B cell (primary cell): ENCODE measurements at regions of chr3 and their contacts with region 1.

Region 1: GRCh38 chr3:114308830-114309229 is 15.0 kb downstream of the TIGIT start:
- DNase-seq: peak; percentile 69
- ATAC-seq: peak; percentile 84
- H3K4me3 ChIP-seq: no peak overlapping the region
- H3K4me3 Mint-ChIP-seq: peak overlapping the region; percentile 77
- H3K27ac ChIP-seq: peak overlapping the region; percentile 74 to 82
- H3K27ac Mint-ChIP-seq: peak overlapping the region; percentile 94
- H3K4me1 ChIP-seq: peaks cover 22 to 27% of the 10 kb centered on the region in 2 donors
- H3K4me1 Mint-ChIP-seq: peaks cover 34% of the 10 kb centered on the region
- H3K27me3 ChIP-seq: no peaks in the 10 kb centered on the region
- H3K27me3 Mint-ChIP-seq: no peaks in the 10 kb centered on the region
- CTCF ChIP-seq: no peak

Region 2: DNA sequence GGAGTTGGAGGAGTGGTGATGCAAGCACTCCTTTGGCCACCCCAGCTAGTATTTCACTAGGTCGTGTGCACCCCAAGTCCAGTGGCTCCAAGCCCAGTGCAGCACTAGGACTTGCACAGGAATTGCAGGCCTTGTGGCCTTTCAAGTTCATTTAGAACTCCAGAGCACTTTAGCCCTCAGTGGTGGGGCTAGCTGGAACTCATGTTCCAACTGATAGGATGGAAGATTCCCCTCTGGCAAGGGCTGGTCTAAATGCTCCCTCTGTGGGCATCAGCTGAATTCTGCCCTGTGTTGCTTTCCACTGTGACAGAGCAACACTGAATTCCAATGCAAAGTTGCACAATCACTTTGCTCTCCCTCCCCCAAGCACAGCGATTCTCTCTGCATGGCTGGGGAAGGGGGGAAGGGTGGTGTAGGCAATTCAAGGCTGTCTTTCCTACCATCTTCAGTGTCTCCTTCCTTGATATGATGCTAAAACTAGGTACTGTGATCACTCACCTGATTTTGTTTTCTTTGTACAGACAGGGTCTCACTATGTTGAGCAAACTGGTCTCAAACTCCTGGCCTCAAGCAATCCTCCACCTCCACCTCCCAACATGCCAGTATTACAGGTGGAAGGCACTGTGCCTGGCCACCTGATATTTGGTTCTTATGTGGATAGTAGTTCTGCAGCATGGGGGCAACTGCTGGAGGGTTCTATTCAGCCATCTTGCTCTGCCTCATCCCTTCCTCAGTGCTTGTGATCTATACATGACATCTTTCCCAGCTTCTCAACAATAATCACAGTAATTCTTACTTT is 622.7 kb before region 1 on chr3:
- CTCF ChIA-PET with region 1: no interaction called
- POLR2A ChIA-PET with region 1: no interaction called
- intact Hi-C with region 1: no loop called
- DNase-seq: no peak
- ATAC-seq: no peak
- H3K4me3 ChIP-seq: no peak overlapping the region
- H3K4me3 Mint-ChIP-seq: no peak overlapping the region
- H3K27ac ChIP-seq: no peak overlapping the region
- H3K27ac Mint-ChIP-seq: no peak overlapping the region
- H3K4me1 ChIP-seq: peaks cover 3 to 4% of the 10 kb centered on the region in 2 donors
- H3K4me1 Mint-ChIP-seq: peaks cover 33% of the 10 kb centered on the region
- H3K27me3 ChIP-seq: no peaks in the 10 kb centered on the region
- H3K27me3 Mint-ChIP-seq: no peaks in the 10 kb centered on the region
- CTCF ChIP-seq: no peak

Region 3: DNA sequence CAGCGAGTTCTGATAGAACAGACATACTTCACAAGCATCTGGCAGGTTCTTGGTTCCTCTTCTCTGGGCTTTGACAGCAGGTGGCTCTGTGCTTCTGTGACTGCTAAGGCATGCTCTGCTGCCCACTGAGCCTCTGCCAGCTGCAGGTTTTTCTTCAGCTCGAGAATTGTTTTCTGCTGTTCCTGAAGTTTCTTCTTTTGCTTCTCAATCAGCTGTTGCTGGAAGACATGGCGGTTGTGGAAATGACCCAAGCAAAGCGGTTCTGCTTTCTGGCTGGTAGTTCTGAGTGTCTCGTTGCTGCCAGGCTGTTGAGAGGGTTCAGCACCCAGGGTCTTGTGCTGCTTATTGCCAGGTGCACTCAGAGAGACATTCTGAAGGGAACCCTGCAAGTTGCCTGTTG is 303.3 kb before region 1 on chr3:
- CTCF ChIA-PET with region 1: no interaction called
- POLR2A ChIA-PET with region 1: no interaction called
- intact Hi-C with region 1: no loop called
- DNase-seq: peak; percentile 91
- ATAC-seq: peak; percentile 95
- H3K4me3 ChIP-seq: peak overlapping the region in 4 of 5 experiments; percentile 31 to 43 (median 38)
- H3K4me3 Mint-ChIP-seq: peak overlapping the region; percentile 80
- H3K27ac ChIP-seq: peak overlapping the region; percentile 93 to 94
- H3K27ac Mint-ChIP-seq: peak overlapping the region; percentile 98
- H3K4me1 ChIP-seq: peaks cover 34 to 45% of the 10 kb centered on the region in 2 donors
- H3K4me1 Mint-ChIP-seq: peaks cover 55% of the 10 kb centered on the region
- H3K27me3 ChIP-seq: no peaks in the 10 kb centered on the region
- H3K27me3 Mint-ChIP-seq: no peaks in the 10 kb centered on the region
- CTCF ChIP-seq: peak; percentile 38

Region 4: GRCh38 chr3:114194750-114195149 is 114.1 kb before region 1 on chr3:
- CTCF ChIA-PET with region 1: no interaction called
- POLR2A ChIA-PET with region 1: no interaction called
- intact Hi-C with region 1: no loop called
- DNase-seq: no peak
- ATAC-seq: no peak
- H3K4me3 ChIP-seq: no peak overlapping the region
- H3K4me3 Mint-ChIP-seq: no peak overlapping the region
- H3K27ac ChIP-seq: no peak overlapping the region
- H3K27ac Mint-ChIP-seq: no peak overlapping the region
- H3K4me1 ChIP-seq: no peaks in the 10 kb centered on the region
- H3K4me1 Mint-ChIP-seq: no peaks in the 10 kb centered on the region
- H3K27me3 ChIP-seq: no peaks in the 10 kb centered on the region
- H3K27me3 Mint-ChIP-seq: no peaks in the 10 kb centered on the region
- CTCF ChIP-seq: no peak

Region 5: DNA sequence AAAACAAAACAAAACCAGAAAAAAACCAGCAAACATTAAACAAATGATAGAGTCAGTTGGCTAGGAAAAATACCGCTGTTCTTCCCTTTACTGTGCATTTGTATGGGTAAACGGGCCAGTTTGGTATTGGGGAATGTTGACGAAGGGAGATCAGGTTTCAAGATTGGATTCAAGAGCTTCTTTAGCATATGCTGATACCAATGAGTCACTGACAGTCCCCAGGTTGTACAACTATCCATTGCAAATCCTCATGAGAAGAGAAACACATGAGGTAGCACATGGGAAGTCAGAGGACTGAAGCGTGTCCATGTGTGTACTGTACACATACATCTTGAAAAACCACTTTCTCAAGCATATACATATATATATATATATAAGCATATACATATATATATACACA is 10.6 kb after region 1 on chr3:
- CTCF ChIA-PET with region 1: no interaction called
- POLR2A ChIA-PET with region 1: no interaction called
- intact Hi-C with region 1: no loop called
- DNase-seq: no peak
- ATAC-seq: no peak
- H3K4me3 ChIP-seq: no peak overlapping the region
- H3K4me3 Mint-ChIP-seq: no peak overlapping the region
- H3K27ac ChIP-seq: no peak overlapping the region
- H3K27ac Mint-ChIP-seq: peak overlapping the region; percentile 17
- H3K4me1 ChIP-seq: no peaks in the 10 kb centered on the region
- H3K4me1 Mint-ChIP-seq: peaks cover 3% of the 10 kb centered on the region
- H3K27me3 ChIP-seq: no peaks in the 10 kb centered on the region
- H3K27me3 Mint-ChIP-seq: no peaks in the 10 kb centered on the region
- CTCF ChIP-seq: no peak

Region 6: DNA sequence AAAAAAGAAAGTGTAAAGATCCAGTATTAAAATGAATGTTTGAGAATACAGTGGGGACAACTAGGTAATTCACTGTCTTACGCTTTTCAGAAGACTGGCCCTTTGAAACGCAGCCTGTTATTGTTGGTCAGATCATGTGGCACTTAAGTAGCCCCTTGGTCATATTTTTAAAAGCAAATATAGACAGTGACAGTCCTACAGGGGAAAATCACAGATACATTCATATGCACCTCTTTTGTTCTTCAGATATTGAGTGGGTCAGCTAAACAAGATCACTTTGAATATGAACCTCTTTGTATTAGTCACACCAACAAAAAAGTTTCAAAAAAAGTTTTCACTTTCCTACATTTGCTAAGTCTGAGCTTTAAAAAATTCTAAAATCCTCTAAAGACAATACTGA is 21.0 kb after region 1 on chr3:
- CTCF ChIA-PET with region 1: interaction called, 4 read pairs
- POLR2A ChIA-PET with region 1: no interaction called
- intact Hi-C with region 1: loop called (anchors 2 kb)
- DNase-seq: no peak
- ATAC-seq: no peak
- H3K4me3 ChIP-seq: no peak overlapping the region
- H3K4me3 Mint-ChIP-seq: no peak overlapping the region
- H3K27ac ChIP-seq: no peak overlapping the region
- H3K27ac Mint-ChIP-seq: no peak overlapping the region
- H3K4me1 ChIP-seq: peaks cover 14% of the 10 kb centered on the region in 2 donors
- H3K4me1 Mint-ChIP-seq: peaks cover 50% of the 10 kb centered on the region
- H3K27me3 ChIP-seq: no peaks in the 10 kb centered on the region
- H3K27me3 Mint-ChIP-seq: no peaks in the 10 kb centered on the region
- CTCF ChIP-seq: no peak

Region 7: DNA sequence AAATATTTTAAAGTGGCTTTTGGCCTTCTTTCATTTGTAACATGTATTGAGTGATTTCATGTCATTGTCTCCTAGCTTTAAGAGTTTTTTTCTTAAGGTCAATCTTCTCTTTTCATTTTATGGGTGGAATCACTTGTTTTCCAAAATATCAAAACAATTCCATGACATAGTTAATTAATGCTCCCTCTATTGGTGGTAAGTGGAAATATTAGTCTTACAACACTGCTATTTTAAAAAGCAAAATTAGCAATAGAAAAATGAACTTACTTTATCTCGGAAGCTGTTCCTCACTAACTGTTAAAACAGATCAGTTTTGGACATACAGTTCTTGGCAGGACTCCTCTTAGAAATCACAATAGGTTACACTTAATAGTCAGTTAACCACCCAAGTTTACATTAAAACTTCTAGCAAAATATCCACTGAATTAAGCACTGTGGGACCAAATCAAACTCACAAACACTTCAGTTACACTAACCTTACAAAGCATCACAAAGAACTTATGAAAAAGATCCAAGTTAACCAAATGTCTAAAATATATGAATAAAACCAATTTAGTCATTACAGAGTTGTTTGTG is 27.4 kb after region 1 on chr3:
- CTCF ChIA-PET with region 1: interaction called, 11 read pairs
- POLR2A ChIA-PET with region 1: no interaction called
- intact Hi-C with region 1: no loop called
- DNase-seq: peak; percentile 25
- ATAC-seq: no peak
- H3K4me3 ChIP-seq: no peak overlapping the region
- H3K4me3 Mint-ChIP-seq: no peak overlapping the region
- H3K27ac ChIP-seq: no peak overlapping the region
- H3K27ac Mint-ChIP-seq: no peak overlapping the region
- H3K4me1 ChIP-seq: peaks cover 14% of the 10 kb centered on the region in 2 donors
- H3K4me1 Mint-ChIP-seq: peaks cover 31% of the 10 kb centered on the region
- H3K27me3 ChIP-seq: no peaks in the 10 kb centered on the region
- H3K27me3 Mint-ChIP-seq: no peaks in the 10 kb centered on the region
- CTCF ChIP-seq: peak; percentile 56